HEK293 (cell line): ENCODE measurements at regions of chr6 and their contacts with region 1.

Region 1: DNA sequence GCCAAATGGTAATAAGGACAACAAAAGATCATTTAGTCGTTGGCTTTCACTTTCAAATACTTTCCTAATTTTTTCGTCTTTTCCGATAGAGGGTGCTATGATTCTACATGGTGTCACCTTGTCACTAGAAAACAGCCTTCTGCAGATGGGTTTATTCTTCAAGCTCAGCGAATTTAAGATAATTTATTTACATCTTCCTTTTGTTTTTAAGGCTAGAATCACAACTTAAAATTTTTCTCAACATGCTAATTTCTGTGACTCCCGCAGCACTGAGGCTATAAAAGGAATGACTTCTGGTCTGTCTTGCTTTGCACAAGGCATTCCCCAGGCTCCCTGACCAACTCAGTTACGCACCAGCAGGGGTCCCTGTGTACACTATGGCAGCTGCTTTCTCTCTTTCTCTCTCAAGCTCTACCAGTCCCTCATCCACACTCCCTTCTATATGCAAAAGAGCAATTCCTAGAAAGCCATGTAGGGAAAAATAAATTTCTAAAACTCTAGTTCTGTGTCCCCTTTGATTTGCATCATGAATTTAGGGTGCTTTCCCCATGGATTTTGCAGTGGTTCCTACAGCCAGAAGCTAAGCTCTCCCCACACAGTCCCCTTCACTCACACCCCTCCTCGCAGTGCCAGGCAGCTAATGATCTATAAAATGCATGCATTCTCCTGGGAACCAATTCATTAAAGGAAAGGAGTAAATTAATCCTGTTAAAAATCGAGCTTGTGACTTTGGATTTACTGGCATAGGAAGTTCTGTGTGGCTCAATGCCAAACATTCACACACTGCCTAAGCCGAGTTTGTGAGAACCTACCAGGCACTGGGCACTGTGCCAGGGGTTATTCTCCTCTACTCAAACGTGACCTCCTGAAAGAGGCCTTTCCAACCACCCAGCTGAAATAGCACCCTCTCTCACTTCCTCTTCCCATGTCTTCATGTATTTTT is 74.5 kb downstream of the DCDC2 start:
- H3K4me3 ChIP-seq: no peak overlapping the region
- H3K27ac ChIP-seq: no peak overlapping the region
- H3K4me1 ChIP-seq: peaks cover 7% of the 10 kb centered on the region; the same call in 1 of the 2 replicates
- CTCF ChIP-seq: peak; percentile 82

Region 2: DNA sequence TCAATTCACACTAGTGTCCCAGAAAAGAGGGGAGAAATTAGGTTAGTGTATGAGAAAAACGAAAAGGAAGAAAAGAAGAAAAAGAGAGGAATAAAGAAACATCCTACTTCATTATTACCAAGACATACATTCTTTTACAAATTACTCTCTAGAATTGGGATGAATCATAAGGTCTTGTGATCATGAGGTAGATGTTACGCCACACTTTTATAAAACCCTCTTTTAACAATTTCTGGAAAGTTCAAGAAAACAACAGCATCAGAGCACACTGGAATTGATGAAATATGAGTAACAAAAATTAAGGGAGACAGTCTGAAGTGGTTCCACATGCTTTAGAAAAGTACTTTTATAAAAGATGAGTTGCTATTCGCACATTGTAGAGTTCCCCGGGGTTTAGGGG is 189.9 kb before region 1 on chr6:
- CTCF ChIA-PET with region 1: no interaction called
- POLR2A ChIA-PET with region 1: no interaction called
- H3K4me3 ChIP-seq: no peak overlapping the region
- H3K27ac ChIP-seq: no peak overlapping the region
- H3K4me1 ChIP-seq: no peaks in the 10 kb centered on the region
- CTCF ChIP-seq: no peak

Region 3: GRCh38 chr6:24255676-24256075 is 27.6 kb before region 1 on chr6:
- CTCF ChIA-PET with region 1: interaction called, 11 read pairs
- POLR2A ChIA-PET with region 1: no interaction called
- H3K4me3 ChIP-seq: no peak overlapping the region
- H3K27ac ChIP-seq: no peak overlapping the region
- H3K4me1 ChIP-seq: no peaks in the 10 kb centered on the region
- CTCF ChIP-seq: no peak

Region 4: GRCh38 chr6:24323632-24324337 is 40.5 kb after region 1 on chr6:
- CTCF ChIA-PET with region 1: interaction called, 12 read pairs
- POLR2A ChIA-PET with region 1: interaction called, 3 read pairs
- H3K4me3 ChIP-seq: no peak overlapping the region
- H3K27ac ChIP-seq: no peak overlapping the region
- H3K4me1 ChIP-seq: peaks cover 26% of the 10 kb centered on the region
- CTCF ChIP-seq: no peak

Region 5: DNA sequence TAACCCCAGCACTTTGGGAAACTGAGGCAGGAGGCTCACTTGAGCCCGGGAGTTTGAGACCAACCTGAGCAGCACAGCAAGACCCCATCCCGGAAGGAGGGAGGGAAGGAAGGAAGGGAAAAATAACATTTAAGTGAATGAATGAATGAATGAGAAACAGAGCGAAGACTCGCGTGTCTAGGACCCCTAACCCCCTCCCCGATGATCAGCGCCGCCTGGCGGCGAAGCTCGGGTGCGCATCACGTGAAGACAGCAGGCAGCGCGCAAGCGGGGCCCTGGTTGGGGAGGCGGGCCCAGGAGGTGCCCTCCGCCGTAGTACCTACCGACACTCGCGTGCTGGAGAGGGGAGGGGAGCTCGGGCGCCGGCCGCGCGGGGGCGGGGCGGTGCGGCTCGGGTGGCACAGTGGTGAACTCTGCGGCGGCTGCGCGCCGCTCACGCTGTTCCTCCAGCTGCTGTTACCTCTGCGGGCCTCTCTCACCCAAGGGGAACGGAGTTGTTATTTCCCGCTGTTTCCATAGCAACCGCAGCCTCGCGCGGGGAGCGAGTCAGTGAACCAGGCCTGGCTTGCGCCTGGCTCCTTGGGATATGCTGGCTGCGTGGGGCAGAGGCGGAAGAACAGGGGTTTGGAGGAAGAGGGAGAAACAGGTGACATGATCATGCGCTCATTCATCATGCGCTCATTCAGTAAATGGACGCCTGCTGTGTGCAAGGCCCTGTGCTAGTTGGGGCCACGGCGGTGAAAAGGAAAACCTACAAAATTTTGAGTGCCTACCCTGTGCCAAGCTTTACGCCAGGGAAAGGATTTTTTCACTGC is 76.5 kb after region 1 on chr6:
- CTCF ChIA-PET with region 1: interaction called, 68 read pairs
- POLR2A ChIA-PET with region 1: interaction called, 12 read pairs
- H3K4me3 ChIP-seq: peak overlapping the region; percentile 49
- H3K27ac ChIP-seq: peak overlapping the region; percentile 47; the same call in 1 of the 2 replicates
- H3K4me1 ChIP-seq: peaks cover 6% of the 10 kb centered on the region; the same call in 1 of the 2 replicates
- CTCF ChIP-seq: peak; percentile 98

Region 6: GRCh38 chr6:24394780-24395437 is 111.6 kb after region 1 on chr6:
- CTCF ChIA-PET with region 1: interaction called, 142 read pairs
- POLR2A ChIA-PET with region 1: interaction called, 8 read pairs
- H3K4me3 ChIP-seq: no peak overlapping the region
- H3K27ac ChIP-seq: no peak overlapping the region
- H3K4me1 ChIP-seq: no peaks in the 10 kb centered on the region
- CTCF ChIP-seq: no peak